Activated CD8-positive, alpha-beta memory T cell treated with anti-CD3 and anti-CD28 coated beads, Interleukin-2, amount 10 ng/mL, durations not matched to agents 7 days and 5 days (primary cell): ENCODE measurements at regions of chr1 and their contacts with region 1.

Region 1: DNA sequence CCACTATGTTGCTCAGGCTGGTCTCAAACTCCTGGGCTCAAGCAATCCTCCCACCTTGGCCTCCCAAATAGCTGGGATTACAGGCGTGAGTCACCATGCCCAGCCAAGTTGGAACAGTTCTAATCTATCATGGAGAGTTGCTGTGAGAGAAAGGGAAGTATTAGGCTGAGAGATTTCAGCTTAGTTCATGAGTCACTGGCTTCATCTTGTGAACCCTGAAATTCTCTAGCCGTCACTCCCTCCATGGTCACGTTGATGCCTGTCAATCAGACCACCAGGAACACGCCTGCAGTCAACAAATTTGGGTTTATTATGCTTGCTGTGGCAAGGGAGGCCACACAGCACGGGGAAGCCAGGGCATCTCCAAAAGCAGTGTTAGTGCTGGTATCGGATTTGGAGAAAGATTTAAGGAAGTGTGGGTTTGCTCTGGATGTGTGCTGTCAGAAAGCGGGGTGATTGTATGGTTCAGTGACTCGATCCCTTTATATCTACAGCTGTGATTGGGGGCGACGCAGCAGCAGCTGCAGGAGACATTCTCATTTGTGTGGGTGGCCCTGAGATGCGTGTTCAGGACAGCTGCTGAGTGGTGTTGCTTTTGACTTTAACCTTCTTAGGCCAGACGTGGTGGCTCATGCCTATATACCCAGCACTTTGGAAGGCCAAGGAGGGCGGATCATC is 18.7 kb downstream of the UQCRHL start:
- DNase-seq: no peak
- ATAC-seq: no peak
- H3K4me3 Mint-ChIP-seq: no peak overlapping the region
- H3K27ac Mint-ChIP-seq: no peak overlapping the region
- H3K4me1 Mint-ChIP-seq: peaks cover 3% of the 10 kb centered on the region
- H3K27me3 Mint-ChIP-seq: peaks cover 8% of the 10 kb centered on the region

Region 2: GRCh38 chr1:15696956-15697521 is 91.7 kb before region 1 on chr1:
- CTCF ChIA-PET with region 1: no interaction called
- DNase-seq: peak; percentile 58
- ATAC-seq: peak; percentile 79
- H3K4me3 Mint-ChIP-seq: peak overlapping the region; percentile 65
- H3K27ac Mint-ChIP-seq: peak overlapping the region; percentile 94
- H3K4me1 Mint-ChIP-seq: peaks cover 23% of the 10 kb centered on the region
- H3K27me3 Mint-ChIP-seq: no peaks in the 10 kb centered on the region

Region 3: DNA sequence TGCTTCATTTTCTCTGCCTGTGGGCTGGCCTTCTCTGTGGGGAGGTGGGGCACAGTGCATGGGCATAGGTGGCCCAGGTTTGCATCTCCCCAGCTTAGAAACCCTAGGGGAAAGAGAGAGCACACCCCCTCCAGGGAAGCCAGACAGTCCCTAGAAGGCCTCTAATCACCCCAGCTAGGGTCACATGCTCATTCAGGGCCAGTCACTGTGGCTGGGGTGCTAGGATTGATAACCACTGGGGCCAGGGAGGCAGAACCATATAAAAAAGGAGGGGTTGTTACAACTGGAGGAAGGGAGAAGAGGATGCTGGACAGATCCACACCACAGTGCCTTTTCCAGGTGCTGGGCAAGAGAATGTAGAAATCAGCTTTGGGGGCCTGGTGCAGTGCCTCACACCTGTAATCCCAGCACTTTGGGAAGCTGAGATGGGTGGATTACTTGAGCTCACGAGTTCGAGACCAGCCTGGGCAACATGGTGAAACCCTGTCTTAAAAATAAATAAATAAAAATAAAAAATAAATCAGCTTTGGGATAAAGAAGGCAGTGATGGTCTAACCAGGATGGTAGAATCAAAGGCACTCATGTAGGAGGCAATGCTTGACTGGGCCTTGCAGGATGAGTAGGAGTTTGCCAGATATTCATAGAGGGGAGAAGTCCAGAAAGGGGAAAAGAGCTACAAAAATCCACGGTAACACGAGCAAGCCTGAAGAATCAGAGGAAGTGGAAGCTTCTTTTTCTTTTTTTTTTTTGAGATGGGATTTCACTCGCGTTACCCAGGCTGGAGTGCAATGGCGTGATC is 10.7 kb before region 1 on chr1:
- CTCF ChIA-PET with region 1: interaction called, 12 read pairs
- DNase-seq: no peak
- ATAC-seq: no peak
- H3K4me3 Mint-ChIP-seq: no peak overlapping the region
- H3K27ac Mint-ChIP-seq: no peak overlapping the region
- H3K4me1 Mint-ChIP-seq: no peaks in the 10 kb centered on the region
- H3K27me3 Mint-ChIP-seq: peaks cover 10% of the 10 kb centered on the region

Region 4: DNA sequence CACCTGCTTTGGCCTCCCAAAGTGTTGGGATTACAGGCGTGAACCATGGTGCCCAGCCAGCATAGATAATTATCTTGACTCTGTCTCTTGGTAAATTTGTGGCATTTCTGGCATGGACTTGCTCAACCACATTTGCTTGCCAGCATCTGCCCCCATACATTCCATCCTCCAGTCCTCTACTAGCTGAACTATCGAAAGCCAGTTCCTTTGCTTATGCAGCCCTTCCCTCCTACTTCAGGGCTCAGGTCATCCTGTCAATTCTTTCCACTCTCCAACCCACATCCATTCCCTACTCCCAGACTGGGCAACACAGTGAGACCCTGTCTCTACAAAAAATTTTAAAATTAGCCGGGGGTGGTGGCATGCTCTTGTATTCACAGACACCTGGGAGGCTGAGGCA is 31.7 kb after region 1 on chr1:
- CTCF ChIA-PET with region 1: interaction called, 18 read pairs
- DNase-seq: no peak
- ATAC-seq: no peak
- H3K4me3 Mint-ChIP-seq: no peak overlapping the region
- H3K27ac Mint-ChIP-seq: no peak overlapping the region
- H3K4me1 Mint-ChIP-seq: peaks cover 14% of the 10 kb centered on the region
- H3K27me3 Mint-ChIP-seq: no peaks in the 10 kb centered on the region

Region 5: DNA sequence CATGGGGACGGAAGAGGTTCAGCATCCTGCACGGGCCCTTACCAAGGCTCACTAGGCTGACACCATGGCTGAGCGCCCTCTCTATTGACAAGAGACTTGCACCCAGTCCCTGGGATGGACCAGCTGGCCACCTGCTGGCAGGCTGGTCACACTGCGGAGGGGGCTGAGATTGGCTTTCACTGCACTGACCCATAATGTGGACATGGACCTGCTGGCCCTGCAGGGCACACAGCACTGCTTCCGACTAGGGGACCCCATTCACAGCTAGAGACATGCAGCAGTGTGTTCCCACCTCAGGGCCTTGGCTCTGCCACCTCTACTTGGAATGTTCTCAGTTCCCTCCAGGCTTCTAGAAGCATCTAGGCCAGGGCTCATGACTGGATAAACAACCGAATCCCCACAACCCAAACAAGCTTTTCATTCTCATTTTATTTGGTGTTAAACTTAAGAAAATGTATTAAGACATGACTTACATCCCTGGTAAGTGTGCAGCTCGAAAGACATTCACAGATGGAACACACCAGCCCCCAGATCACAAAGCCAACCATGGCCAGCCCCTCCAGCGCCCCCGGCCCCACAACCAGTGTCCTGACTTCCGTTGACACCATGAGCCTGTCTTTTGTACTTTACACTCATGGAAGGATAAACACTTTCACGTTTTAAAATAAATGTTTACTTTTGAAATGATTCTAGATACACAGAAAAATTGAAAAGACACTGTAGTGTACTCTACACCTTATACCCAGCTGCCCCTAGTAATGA is 206.0 kb after region 1 on chr1:
- CTCF ChIA-PET with region 1: interaction called, 10 read pairs
- DNase-seq: peak; percentile 70
- ATAC-seq: peak; percentile 77
- H3K4me3 Mint-ChIP-seq: no peak overlapping the region
- H3K27ac Mint-ChIP-seq: no peak overlapping the region
- H3K4me1 Mint-ChIP-seq: no peaks in the 10 kb centered on the region
- H3K27me3 Mint-ChIP-seq: peaks cover 7% of the 10 kb centered on the region

Region 6: GRCh38 chr1:16055613-16056520 is 267.1 kb after region 1 on chr1:
- CTCF ChIA-PET with region 1: interaction called, 12 read pairs
- DNase-seq: peak; percentile 94
- ATAC-seq: peak; percentile 98
- H3K4me3 Mint-ChIP-seq: no peak overlapping the region
- H3K27ac Mint-ChIP-seq: no peak overlapping the region
- H3K4me1 Mint-ChIP-seq: peaks cover 11% of the 10 kb centered on the region
- H3K27me3 Mint-ChIP-seq: peaks cover 4% of the 10 kb centered on the region